CD4-positive, alpha-beta memory T cell (primary cell): ENCODE measurements at regions of chr1 and their contacts with region 1.

Region 1: DNA sequence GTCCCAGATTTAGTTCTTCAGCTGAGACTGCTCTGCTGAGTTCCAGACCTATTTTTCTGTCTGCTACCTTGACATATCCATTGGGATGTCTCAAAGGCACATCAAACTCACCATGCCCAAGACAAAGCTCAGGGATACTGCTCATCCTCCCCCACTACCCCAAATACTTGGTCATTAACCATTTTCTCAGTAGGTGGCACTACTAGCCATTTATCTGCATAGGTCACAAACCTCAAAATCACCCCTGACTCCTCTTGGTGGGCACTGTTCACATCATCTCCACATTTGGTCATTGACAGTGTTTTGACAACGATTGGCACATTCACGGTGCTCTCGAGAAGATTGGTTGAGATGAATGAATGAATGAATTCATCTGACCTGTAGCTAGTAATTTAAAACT is 32.1 kb downstream of the CACNA1S start:
- DNase-seq: no peak
- H3K4me3 ChIP-seq: no peak overlapping the region
- H3K4me3 Mint-ChIP-seq: no peak overlapping the region
- H3K27ac ChIP-seq: no peak overlapping the region
- H3K27ac Mint-ChIP-seq: no peak overlapping the region
- H3K4me1 ChIP-seq: no peaks in the 10 kb centered on the region
- H3K4me1 Mint-ChIP-seq: peaks cover 0 to 1% (median under 1%) of the 10 kb centered on the region in 4 donors
- H3K27me3 ChIP-seq: no peaks in the 10 kb centered on the region
- H3K27me3 Mint-ChIP-seq: peaks cover 0 to 3% of the 10 kb centered on the region in 2 donors

Region 2: DNA sequence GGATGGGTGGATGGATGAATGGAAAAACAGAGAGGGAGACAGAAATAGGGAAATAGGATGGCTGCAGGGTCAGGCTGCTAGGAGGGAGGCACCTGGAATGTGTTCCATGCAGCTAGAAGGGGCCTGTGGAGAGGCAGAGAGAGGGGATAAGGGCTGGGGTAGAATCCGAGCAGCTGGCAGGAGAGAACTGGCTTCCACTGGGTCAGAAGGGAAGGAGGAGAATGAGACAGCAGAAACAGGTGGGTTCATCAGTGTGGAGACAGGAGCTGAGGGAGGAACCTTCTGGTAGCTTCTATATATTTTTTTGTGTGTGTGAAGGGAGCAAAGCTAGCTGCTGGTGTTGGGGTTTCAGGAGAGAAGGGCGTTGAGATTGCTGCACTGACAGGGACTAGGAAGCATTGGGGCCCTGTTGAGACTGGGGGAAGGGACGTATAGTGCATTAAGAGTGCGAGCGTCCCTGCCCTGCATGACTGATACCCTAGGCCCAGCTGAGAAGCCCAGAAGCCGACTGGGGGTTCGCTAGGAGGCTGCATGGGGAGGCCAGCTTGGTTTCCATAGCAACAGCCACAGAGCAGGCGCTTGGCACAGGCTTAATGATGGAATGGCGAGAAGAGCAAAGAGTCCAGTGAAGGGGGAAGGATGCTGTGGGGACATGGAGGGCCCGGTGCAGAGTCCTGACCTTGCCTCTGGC is 41.8 kb before region 1 on chr1:
- CTCF ChIA-PET with region 1: no interaction called
- POLR2A ChIA-PET with region 1: no interaction called
- intact Hi-C with region 1: no loop called
- DNase-seq: no peak
- H3K4me3 ChIP-seq: no peak overlapping the region
- H3K4me3 Mint-ChIP-seq: no peak overlapping the region
- H3K27ac ChIP-seq: no peak overlapping the region
- H3K27ac Mint-ChIP-seq: no peak overlapping the region
- H3K4me1 ChIP-seq: no peaks in the 10 kb centered on the region
- H3K4me1 Mint-ChIP-seq: peaks cover 0 to 3% (median 3%) of the 10 kb centered on the region in 4 donors
- H3K27me3 ChIP-seq: no peaks in the 10 kb centered on the region
- H3K27me3 Mint-ChIP-seq: no peaks in the 10 kb centered on the region

Region 3: DNA sequence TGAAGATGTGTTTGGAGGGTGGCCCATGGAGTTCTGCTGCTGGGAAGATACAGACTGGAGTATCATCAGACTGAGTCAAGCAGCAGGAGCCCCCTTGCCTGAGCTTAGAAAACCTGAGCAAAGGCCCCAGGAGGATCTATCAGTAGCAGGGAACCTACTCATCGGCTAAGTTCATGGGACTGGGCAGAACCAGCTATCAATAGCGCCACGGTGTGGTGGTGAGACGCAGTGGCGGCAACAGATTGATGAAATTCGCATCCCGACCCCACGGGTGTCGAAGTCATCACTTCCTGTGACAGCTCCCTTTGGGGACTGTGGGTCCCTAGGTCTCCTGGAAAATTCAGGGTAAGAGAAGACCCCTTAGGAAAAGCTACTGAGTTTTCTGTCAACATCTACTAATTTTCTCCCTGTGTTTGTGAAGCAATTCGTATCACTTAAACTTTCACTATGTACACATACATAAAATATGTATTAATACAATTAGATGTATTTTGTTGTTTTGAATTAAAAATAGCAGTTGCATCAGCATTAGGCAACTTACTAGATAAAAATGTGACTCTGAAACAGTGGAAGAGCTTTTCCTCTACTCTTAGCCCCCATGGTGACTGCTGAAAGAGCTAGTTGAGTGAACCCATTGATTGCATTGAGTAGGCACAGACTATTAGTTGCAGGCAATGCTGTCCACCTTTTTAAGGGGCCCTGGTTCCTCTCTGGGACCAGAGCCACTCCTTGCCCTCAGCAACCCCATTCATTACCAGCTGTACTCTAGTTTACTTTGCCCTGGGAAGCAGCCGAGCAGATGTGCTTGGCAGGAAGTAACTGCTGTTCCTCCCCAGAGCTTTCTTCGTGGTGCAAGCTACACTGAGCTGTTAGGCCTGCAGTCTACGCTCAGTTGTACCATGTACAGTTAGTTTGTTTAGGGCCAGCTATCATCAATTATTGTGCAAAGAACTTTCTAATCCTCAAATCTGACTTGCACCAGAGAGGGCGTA is 39.4 kb after region 1 on chr1:
- CTCF ChIA-PET with region 1: interaction called, 57 read pairs
- POLR2A ChIA-PET with region 1: no interaction called
- intact Hi-C with region 1: no loop called
- DNase-seq: peak; percentile 35 to 58 (median 42)
- H3K4me3 ChIP-seq: no peak overlapping the region
- H3K4me3 Mint-ChIP-seq: peak overlapping the region in 2 of 8 donors; percentile 5 to 26
- H3K27ac ChIP-seq: no peak overlapping the region
- H3K27ac Mint-ChIP-seq: no peak overlapping the region
- H3K4me1 ChIP-seq: peaks cover 19% of the 10 kb centered on the region
- H3K4me1 Mint-ChIP-seq: peaks cover under 1 to 19% (median 10%) of the 10 kb centered on the region in 4 donors
- H3K27me3 ChIP-seq: peaks cover 4% of the 10 kb centered on the region
- H3K27me3 Mint-ChIP-seq: peaks cover 0 to 7% of the 10 kb centered on the region in 2 donors